ENCODE measurements at regions of chr20 and their contacts with region 1.

Region 1: DNA sequence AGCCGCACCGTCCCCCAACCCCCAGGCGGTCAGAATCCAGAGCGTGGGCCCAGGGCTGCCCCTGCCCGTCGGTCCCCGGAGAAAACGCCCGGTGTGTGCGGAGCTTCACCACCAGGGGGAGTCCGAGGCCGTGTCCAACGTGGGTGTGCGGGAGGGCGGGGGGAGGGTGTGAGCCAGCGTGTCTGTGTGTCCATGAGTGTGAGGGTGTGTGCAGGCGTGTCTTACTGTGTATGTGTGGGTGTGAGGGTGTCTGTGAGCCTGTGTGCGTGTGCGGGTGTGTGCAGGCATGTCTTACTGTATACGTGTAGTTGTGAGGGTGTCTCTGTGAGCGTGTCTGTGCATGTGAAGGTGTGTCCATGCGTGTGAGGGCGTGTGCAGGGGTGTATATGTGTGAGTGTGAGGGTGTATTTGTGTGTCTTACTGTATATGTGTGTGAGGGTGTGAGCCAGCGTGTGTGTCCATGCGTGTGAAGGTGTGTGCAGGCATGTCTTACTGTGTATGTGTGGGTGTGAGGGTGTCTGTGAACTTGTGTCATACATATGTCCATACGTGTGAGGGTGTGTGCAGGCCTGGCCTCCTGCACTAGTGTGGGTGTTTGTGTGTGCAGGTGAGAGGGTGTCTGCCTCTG is 24.6 kb upstream of the GATA5 start:
- H3K4me3 ChIP-seq: no peak overlapping the region
- H3K27ac ChIP-seq: no peak overlapping the region
- H3K4me1 ChIP-seq: no peaks in the 10 kb centered on the region
- CTCF ChIP-seq: peak; percentile 93

Region 2: DNA sequence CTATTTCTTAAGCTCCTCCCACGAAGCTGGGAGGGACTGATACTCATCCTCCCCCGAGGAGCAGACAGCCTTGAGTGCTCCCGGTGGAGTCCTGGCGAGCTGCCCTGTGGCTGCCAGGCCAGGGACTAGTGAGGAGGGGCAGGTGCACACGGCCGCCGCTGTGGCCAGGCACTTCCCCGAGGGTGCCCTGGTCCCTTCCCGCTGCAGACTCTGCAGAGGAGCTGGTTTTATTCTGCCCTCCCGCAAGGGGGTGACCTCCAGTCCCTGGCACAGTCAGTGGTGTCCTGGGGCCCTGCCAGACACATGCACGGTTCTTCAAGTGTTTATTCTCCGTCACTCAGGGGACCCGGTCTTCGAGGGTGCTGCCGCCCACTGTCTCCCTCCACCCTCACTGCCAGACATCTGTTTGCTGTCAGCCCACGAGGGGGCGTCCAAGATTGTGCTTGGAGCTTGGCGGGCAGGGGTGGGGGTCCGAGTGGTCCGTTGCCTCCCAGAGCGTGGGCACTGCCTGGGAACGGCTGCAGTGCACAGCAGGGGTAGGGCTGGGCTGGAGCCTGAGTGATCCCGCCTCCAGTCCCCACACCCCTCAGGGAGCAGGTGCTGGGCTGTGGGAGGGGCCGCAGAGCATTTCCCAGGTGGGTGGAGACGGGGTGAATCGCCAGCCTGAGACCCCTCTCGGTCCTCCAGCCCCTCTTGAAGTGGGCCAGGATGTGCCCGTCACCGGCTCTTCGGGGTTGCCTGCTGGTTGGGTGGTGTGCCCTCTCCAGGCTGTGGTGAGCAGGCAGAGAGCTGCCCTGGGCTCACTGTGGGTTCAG is 90.2 kb before region 1 on chr20:
- CTCF ChIA-PET with region 1: interaction called, 18 read pairs
- POLR2A ChIA-PET with region 1: no interaction called
- H3K4me3 ChIP-seq: no peak overlapping the region
- H3K27ac ChIP-seq: no peak overlapping the region
- H3K4me1 ChIP-seq: peaks cover 6% of the 10 kb centered on the region; the same call in 1 of the 2 replicates
- CTCF ChIP-seq: peak; percentile 87

Region 3: DNA sequence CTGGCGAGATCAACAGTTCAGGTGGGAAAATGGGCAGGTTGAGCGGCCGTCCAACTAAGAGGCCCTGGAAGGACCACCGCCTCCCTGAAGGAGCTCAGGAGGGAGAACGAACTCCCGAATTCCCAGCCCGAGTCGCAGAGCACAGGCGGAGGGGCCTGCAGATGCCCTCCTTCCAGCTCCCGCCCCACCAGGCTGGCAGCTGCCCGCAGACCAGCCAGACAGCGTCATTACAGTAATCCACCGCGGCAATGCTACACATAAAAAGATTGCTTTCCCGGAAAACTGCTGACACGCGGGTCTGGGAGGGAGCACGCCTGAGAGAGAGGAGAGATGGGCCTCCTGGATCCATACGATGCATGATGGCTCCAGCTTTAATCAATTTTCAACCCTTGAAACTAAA is 111.5 kb after region 1 on chr20:
- CTCF ChIA-PET with region 1: interaction called, 31 read pairs
- POLR2A ChIA-PET with region 1: no interaction called
- H3K4me3 ChIP-seq: no peak overlapping the region
- H3K27ac ChIP-seq: no peak overlapping the region
- H3K4me1 ChIP-seq: no peaks in the 10 kb centered on the region
- CTCF ChIP-seq: no peak

Region 4: GRCh38 chr20:62616728-62617621 is 116.6 kb after region 1 on chr20:
- CTCF ChIA-PET with region 1: interaction called, 31 read pairs
- POLR2A ChIA-PET with region 1: no interaction called
- H3K4me3 ChIP-seq: no peak overlapping the region
- H3K27ac ChIP-seq: no peak overlapping the region
- H3K4me1 ChIP-seq: no peaks in the 10 kb centered on the region
- CTCF ChIP-seq: peak; percentile 91

Measured in HEK293 (cell line).